B cell (primary cell): ENCODE measurements at regions of chr10 and their contacts with region 1.

Region 1: DNA sequence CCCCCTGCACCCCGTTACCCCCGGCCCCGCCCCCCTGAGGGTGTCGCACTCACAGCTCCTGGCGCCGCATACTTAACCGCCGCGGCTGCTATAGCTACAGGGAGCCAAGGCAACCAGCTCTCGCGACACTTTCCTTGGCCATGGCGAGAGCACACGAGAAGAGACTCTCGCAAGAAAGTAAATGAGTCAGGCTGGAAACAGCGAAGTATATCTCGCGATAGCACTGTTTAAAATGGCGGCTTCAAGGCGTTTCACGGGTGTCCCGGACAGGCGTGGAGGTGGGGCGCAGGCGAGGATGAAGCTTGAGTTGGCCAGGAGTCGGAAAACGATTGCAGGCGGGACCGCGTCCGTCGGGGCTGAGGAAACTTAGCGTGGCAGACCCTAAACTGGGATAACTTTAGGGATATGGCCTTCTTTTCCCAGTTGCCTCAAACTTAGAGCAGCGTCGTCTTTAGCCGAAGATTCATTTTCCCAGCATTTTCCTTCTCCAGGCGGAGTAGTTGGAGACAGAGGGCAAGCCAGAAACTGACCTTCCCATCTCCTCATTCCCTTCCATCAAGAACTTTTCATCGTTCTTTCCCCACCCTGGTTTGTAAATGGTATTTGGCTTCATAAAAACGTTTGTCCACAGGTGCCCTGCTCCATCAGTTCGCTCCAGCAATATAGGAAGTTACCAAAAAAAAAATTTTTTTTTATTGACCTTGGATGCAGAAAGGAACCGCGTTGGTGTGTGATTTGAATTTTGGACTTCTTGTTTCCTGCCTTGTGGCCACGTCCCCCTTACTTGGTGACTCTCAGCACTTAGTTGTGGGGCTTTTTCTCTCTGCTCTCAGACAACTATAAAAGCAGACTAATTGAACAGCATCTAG is 15.2 kb downstream of the MYOZ1 start:
- DNase-seq: peak; percentile 96
- ATAC-seq: peak; percentile 91
- H3K4me3 ChIP-seq: peak overlapping the region; percentile 71 to 97 (median 90)
- H3K4me3 Mint-ChIP-seq: peak overlapping the region; percentile 98
- H3K27ac ChIP-seq: peak overlapping the region; percentile 70 to 92
- H3K27ac Mint-ChIP-seq: peak overlapping the region; percentile 97
- H3K4me1 ChIP-seq: peaks cover 11% of the 10 kb centered on the region in 2 donors
- H3K4me1 Mint-ChIP-seq: peaks cover 16% of the 10 kb centered on the region
- H3K27me3 ChIP-seq: no peaks in the 10 kb centered on the region
- H3K27me3 Mint-ChIP-seq: no peaks in the 10 kb centered on the region
- CTCF ChIP-seq: no peak

Region 2: DNA sequence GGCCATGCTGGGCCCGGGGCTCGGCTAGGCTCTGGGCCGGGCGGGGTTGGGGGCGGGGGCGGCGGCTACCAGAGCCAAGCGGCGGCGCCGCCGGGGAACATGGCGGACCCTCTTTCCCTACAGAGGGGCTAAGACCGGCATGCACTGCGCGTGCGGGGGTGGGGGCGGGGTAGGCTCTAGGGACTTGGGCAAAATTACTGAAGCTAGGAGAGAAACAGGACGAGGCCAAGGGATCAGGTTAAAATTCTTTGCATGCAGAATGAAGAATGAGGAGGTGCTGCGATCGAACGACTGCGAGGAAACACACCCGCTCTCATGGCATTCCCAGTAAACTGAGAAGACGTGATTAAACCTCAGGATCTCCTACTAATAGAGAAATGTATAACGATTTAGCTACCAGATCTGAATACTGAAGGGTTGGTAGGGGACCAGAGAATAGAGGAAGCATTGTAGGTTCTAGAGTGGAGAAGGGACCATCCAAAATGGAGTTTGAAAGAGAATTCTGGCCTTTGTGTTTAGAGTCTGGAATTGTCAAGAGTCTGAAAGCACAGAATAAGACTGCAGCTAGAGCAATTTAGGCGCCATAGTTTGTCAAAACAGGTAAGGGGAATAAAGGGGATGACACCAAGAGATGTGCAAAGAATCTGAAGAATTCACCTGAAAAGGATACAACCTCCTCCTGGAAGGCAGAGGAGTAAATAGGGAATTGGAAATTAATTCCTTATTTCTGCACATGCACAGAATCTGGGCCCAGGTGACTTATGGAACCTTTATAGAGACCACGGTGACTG is 130.0 kb before region 1 on chr10 and contains the start of gene PPP3CB:
- CTCF ChIA-PET with region 1: interaction called, 9 read pairs
- POLR2A ChIA-PET with region 1: interaction called, 9 read pairs
- intact Hi-C with region 1: loop called (anchors 1 kb)
- DNase-seq: peak; percentile 94
- ATAC-seq: peak; percentile 70
- H3K4me3 ChIP-seq: peak within 1 kb of the TSS; percentile 63 to 97 (median 85)
- H3K4me3 Mint-ChIP-seq: peak within 1 kb of the TSS; percentile 94
- H3K27ac ChIP-seq: peak within 1 kb of the TSS; percentile 89 to 93
- H3K27ac Mint-ChIP-seq: peak within 1 kb of the TSS; percentile 96
- H3K4me1 ChIP-seq: peaks cover 30 to 40% of the 10 kb centered on the region in 2 donors
- H3K4me1 Mint-ChIP-seq: peaks cover 52% of the 10 kb centered on the region
- H3K27me3 ChIP-seq: no peaks in the 10 kb centered on the region
- H3K27me3 Mint-ChIP-seq: no peaks in the 10 kb centered on the region
- CTCF ChIP-seq: no peak
- total RNA-seq, gene PPP3CB: 51.2 and 52.8 TPM in 2 replicates

Region 3: DNA sequence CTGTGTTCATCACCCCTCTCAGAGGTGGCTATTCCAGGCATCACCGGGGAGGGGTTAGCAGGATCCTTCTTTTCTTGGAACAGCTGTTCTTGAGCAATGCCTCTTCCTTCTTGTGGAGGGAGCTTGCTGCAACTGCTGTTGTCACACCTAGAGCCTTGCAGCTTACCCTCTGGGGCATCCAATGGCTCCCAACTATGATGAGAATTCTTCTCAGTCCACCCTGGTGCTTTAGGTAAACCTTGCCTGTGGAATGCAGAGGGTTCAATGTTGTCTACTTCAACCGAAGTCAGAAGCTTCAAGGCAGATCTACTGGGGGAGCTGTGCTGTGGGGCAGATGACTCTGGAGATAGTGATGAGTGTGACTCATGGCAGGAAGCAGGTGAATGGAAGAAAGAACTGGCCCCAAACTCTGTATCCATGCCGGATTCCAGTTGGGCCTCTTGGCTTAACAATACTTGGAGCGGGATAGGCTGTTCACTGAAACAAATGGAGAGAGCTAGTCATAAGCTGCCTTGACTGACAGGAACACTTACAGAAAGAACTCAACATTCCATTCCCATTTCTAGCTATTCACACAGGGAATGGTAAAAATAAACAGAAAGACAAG is 108.7 kb before region 1 on chr10:
- CTCF ChIA-PET with region 1: no interaction called
- POLR2A ChIA-PET with region 1: no interaction called
- intact Hi-C with region 1: no loop called
- DNase-seq: no peak
- ATAC-seq: no peak
- H3K4me3 ChIP-seq: no peak overlapping the region
- H3K4me3 Mint-ChIP-seq: no peak overlapping the region
- H3K27ac ChIP-seq: no peak overlapping the region
- H3K27ac Mint-ChIP-seq: no peak overlapping the region
- H3K4me1 ChIP-seq: no peaks in the 10 kb centered on the region
- H3K4me1 Mint-ChIP-seq: no peaks in the 10 kb centered on the region
- H3K27me3 ChIP-seq: no peaks in the 10 kb centered on the region
- H3K27me3 Mint-ChIP-seq: no peaks in the 10 kb centered on the region
- CTCF ChIP-seq: no peak

Region 4: DNA sequence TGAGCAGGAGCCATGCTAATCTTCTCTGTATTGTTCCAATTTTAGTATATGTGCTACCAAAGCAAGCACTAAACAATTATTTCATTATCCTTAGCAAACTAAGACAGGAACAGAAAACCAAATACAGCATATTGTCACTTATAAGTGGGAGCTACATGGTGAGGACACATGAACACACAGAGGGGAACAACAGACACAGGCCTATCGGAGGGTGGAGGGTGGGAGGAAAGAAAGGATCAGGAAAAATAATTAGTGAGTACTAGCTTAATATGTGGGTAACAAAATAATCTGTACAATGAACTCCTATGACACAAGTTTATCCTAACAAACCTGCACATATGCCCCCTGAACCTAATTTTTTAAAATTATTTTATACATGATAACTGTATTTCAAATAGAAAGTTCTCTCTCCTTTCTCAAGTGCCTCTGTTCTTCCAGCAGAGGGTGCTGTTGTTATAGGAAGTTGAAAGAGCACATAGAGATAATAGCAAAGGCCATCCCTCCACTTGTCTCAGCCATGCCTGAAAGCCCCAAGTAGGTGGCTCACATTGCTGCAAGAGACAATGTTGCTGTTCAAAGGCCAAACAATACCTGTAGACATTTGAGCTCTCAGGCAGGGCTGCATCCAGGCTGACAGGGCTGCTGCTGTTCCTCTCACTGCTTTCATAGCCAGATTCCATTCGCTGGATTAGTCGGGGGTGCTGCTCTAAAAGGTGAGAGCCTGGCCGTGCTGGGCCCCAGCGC is 96.9 kb before region 1 on chr10:
- CTCF ChIA-PET with region 1: interaction called, 5 read pairs
- POLR2A ChIA-PET with region 1: no interaction called
- intact Hi-C with region 1: loop called (anchors 1 kb)
- DNase-seq: peak; percentile 79
- ATAC-seq: peak; percentile 88
- H3K4me3 ChIP-seq: no peak overlapping the region
- H3K4me3 Mint-ChIP-seq: no peak overlapping the region
- H3K27ac ChIP-seq: no peak overlapping the region
- H3K27ac Mint-ChIP-seq: no peak overlapping the region
- H3K4me1 ChIP-seq: no peaks in the 10 kb centered on the region
- H3K4me1 Mint-ChIP-seq: no peaks in the 10 kb centered on the region
- H3K27me3 ChIP-seq: no peaks in the 10 kb centered on the region
- H3K27me3 Mint-ChIP-seq: no peaks in the 10 kb centered on the region
- CTCF ChIP-seq: peak; percentile 90